Astrocyte of the cerebellum (primary cell): ENCODE measurements at regions of chr6 and their contacts with region 1.

Region 1: GRCh38 chr6:37127961-37128862 is 41.7 kb upstream of the PIM1 start:
- DNase-seq: peak; percentile 37
- H3K4me3 ChIP-seq: no peak overlapping the region
- CTCF ChIP-seq: no peak

Region 2: DNA sequence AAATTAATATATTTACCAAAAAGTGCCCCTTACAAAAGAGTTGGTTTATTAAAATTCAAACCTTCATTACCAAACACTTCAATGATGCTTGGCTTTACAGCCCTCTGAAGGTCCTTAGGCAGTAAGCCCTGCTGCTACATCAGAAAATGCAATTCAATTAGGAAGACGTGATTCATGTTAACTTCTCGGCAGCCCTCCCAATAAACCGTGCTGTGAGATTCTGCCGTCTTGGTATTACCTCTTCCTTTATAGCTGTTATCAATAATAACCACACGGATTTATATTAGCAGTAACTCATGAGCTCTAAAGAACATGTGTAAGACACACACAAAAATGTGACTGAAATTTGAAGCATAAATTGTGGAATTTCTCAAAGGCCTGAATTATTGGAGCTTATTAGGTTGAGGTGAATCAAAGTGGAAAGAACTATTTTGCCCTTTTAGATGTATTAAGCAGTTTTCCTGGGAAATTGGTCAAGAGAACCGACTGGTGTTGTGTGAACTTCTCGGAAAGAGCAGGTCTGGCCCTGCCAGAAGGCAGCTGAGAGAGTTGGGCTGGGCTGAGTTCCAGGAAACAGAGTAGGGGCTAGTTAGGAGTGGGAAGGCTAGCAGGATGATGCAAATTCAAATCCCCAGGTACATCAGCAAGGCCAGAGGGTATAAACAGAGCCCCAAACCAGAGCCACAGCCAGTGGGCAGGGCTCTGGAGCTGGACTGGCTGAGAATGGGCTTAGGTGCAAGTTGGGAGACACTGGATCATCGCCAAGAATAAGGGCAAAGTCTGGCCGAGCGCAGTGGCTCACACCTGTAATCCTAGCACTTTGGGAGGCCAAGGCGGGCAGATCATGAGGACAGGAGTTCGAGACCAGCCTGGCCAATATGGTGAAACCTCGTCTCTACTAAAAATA is 89.7 kb before region 1 on chr6:
- in situ Hi-C with region 1: no loop called
- DNase-seq: peak; percentile 15
- H3K4me3 ChIP-seq: no peak overlapping the region
- CTCF ChIP-seq: no peak

Region 3: GRCh38 chr6:37155394-37156312 is 27.4 kb after region 1 on chr6:
- in situ Hi-C with region 1: no loop called
- DNase-seq: no peak
- H3K4me3 ChIP-seq: no peak overlapping the region
- CTCF ChIP-seq: no peak

Region 4: DNA sequence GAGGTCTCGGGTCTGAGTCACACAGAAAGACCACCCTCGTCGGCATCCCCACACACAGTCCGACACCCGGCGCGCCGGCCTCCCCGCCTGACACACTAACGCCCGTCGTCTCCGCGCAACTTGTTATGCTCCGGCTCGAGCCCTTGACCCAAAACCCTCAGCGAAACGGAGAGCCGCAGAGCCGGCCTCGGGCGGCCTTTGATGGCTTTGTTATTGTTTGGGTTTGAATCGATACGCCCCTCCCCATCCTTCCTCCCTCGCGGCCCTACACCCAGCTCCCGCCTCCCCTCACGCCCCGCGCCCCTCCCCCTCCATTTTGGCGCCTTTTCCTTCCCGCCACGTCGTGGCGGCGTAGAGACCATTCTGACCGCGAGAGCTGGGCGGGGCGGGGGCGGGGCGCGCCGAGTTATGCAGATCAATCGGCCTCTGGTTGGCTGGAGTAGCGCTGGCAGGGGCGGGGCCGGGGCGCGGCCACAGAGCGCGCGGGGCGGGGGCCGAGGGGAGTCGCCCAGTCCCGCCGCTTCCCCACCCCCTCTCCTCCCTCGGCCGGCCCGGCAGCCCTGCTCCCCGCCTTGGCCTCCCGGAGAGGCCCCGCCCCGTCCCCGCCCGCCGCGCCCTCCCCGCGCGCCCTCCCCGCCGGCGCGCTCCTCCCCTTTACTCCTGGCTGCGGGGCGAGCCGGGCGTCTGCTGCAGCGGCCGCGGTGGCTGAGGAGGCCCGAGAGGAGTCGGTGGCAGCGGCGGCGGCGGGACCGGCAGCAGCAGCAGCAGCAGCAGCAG is 41.5 kb after region 1 on chr6 and contains the start of gene PIM1:
- in situ Hi-C with region 1: loop called (anchors 5 kb)
- DNase-seq: peak; percentile 90
- H3K4me3 ChIP-seq: peak within 1 kb of the TSS; percentile 96
- CTCF ChIP-seq: no peak